ENCODE measurements at regions of chr15 and their contacts with region 1.

Region 1: GRCh38 chr15:89647191-89647851 is 7.9 kb downstream of the KIF7 start:
- DNase-seq: peak; percentile 81 to 94
- ATAC-seq: peak; percentile 86
- H3K4me3 ChIP-seq: no peak overlapping the region
- H3K27ac ChIP-seq: no peak overlapping the region
- H3K4me1 ChIP-seq: no peaks in the 10 kb centered on the region
- H3K27me3 ChIP-seq: no peaks in the 10 kb centered on the region

Region 2: GRCh38 chr15:89680282-89680873 is 33.1 kb after region 1 on chr15:
- intact Hi-C with region 1: loop called in 1 of 2 experiments (anchors 5 kb)
- DNase-seq: peak in 1 of 2 donors; percentile 72
- ATAC-seq: peak; percentile 92
- H3K4me3 ChIP-seq: no peak overlapping the region
- H3K27ac ChIP-seq: peak overlapping the region in 1 of 2 donors; percentile 39
- H3K4me1 ChIP-seq: peaks cover 0 to 8% of the 10 kb centered on the region in 2 donors
- H3K27me3 ChIP-seq: no peaks in the 10 kb centered on the region

Region 3: GRCh38 chr15:89690276-89691218 is 43.2 kb after region 1 on chr15 and contains the starts of genes PEX11A and WDR93:
- intact Hi-C with region 1: loop called in 1 of 2 experiments (anchors 5 kb)
- DNase-seq: peak; percentile 90 to 93
- ATAC-seq: peak; percentile 93
- H3K4me3 ChIP-seq: peak within 1 kb of the TSS; percentile 71 to 78
- H3K27ac ChIP-seq: no peak within 1 kb of the TSS
- H3K4me1 ChIP-seq: peaks cover 0 to 1% of the 10 kb centered on the region in 2 donors
- H3K27me3 ChIP-seq: no peaks in the 10 kb centered on the region
- total RNA-seq, gene PEX11A: 7.7 to 9.1 TPM
- total RNA-seq, gene WDR93: not detected

Region 4: DNA sequence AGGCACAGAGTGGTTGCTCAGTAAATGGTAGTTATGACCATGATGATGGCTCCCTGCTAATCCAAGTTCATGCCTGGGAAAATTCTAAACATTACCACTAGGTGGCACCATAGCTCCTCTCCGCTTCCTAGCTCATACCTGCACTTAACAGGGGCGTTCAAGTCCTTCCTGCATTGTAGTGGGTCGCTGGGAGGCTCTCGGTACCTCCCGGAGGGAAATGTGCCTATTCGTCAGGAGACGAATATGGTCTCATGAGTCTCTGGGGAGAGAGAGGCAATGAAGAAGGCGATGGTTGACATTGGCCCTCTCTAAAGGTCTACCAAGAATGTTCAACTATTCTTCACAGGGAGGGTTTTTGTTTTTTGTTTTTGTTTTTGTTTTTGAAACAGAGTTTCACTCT is 92.8 kb after region 1 on chr15:
- intact Hi-C with region 1: loop called in 1 of 2 experiments (anchors 1 kb)
- DNase-seq: no peak
- ATAC-seq: peak; percentile 79
- H3K4me3 ChIP-seq: no peak overlapping the region
- H3K27ac ChIP-seq: no peak overlapping the region
- H3K4me1 ChIP-seq: no peaks in the 10 kb centered on the region
- H3K27me3 ChIP-seq: no peaks in the 10 kb centered on the region

Region 5: GRCh38 chr15:89750560-89751542 is 103.5 kb after region 1 on chr15 and contains the start of gene MESP1:
- intact Hi-C with region 1: loop called (anchors 5 kb)
- DNase-seq: peak; percentile 94 to 98
- ATAC-seq: peak; percentile 94
- H3K4me3 ChIP-seq: peak within 1 kb of the TSS; percentile 27 to 64
- H3K27ac ChIP-seq: no peak within 1 kb of the TSS
- H3K4me1 ChIP-seq: no peaks in the 10 kb centered on the region
- H3K27me3 ChIP-seq: no peaks in the 10 kb centered on the region
- total RNA-seq, gene MESP1: 0.63 to 1.2 TPM

Region 6: DNA sequence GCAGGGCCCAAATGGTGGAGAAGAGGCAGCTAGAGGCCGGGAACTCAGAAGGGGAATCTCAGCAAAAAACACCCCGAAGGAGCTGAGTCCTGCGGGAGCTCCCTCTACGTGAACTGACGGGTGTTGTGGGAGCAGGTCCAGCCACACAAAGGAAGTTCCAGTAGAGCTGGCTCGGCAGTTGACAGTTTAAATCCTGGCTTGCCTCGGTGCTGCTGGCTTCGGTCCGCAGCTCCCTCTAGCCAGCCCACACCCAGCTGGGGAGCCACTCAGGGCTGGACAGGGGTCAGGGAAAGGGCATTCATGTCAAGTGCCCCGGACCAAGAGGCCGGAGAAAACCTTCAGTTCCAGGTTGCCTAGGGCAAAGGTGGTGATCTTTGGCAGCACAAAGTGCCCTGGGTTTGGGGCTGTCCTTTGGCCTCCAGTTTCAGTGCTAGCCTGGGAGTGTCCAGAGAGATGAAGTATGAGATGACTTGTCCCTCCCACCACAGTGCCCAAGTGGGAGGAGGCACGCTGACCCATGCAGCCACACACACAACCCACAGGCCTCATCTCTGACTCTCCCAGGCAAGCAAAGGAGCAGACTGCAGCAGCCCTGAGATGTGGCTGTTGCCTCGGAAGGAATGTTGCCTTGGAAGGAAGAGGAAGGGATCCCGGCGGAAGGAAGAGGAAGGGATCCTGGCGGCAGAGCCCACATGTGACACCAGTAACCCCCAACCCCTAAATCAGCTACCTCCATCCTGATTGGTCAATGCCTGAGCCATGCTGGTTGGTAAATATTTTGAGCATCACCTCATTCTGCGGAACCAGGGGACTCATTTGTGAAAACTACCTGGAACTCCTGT is 181.1 kb after region 1 on chr15:
- intact Hi-C with region 1: no loop called
- DNase-seq: peak in 1 of 2 donors; percentile 80
- ATAC-seq: peak; percentile 68
- H3K4me3 ChIP-seq: no peak overlapping the region
- H3K27ac ChIP-seq: peak overlapping the region in 1 of 2 donors; percentile 20
- H3K4me1 ChIP-seq: no peaks in the 10 kb centered on the region
- H3K27me3 ChIP-seq: no peaks in the 10 kb centered on the region

Region 7: DNA sequence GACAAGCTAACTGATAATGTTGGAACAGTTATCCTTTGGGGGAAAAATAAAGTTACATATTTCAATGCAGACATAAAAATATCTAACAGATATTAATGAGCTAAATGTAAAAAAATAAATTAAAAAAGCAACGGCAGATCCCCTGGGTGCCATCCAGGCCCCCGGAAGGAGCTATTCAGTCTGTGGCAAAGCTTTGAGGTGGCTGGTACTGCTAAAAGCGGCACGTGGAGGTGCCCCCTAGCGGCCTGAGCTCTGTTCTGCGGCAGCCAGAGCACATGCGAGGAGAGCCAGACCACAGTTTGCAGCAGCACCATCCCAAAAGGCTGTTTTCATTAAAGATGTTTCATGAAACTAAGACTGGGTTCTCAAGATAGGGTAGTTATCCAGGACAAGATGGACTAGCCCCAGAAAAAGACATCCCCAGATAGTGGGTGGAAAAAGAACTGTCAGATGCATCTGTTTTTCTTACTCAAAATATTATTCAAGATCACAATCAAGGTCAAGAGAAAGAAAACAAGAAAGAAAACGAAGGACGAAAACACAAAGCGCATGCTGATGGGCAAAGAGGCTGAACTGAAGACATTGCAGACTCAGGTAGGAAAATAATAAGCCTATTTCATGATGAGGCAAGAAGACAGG is 227.7 kb after region 1 on chr15:
- intact Hi-C with region 1: loop called in 1 of 2 experiments (anchors 10 kb)
- DNase-seq: peak; percentile 88 to 94
- ATAC-seq: peak; percentile 91
- H3K4me3 ChIP-seq: no peak overlapping the region
- H3K27ac ChIP-seq: no peak overlapping the region
- H3K4me1 ChIP-seq: no peaks in the 10 kb centered on the region
- H3K27me3 ChIP-seq: no peaks in the 10 kb centered on the region